ENCODE measurements at regions of chr19 and their contacts with region 1.

Region 1: GRCh38 chr19:7912136-7912696 is 2.4 kb upstream of the TGFBR3L start:
- DNase-seq: no peak
- ATAC-seq: no peak
- H3K4me3 ChIP-seq: no peak overlapping the region
- H3K4me3 Mint-ChIP-seq: no peak overlapping the region
- H3K27ac ChIP-seq: no peak overlapping the region
- H3K27ac Mint-ChIP-seq: no peak overlapping the region
- H3K4me1 ChIP-seq: peaks cover 16 to 20% of the 10 kb centered on the region in 2 donors
- H3K4me1 Mint-ChIP-seq: peaks cover 11% of the 10 kb centered on the region
- H3K27me3 ChIP-seq: peaks cover 0 to 23% (median 11%) of the 10 kb centered on the region in 4 experiments
- H3K27me3 Mint-ChIP-seq: peaks cover 9% of the 10 kb centered on the region
- CTCF ChIP-seq: no peak

Region 2: DNA sequence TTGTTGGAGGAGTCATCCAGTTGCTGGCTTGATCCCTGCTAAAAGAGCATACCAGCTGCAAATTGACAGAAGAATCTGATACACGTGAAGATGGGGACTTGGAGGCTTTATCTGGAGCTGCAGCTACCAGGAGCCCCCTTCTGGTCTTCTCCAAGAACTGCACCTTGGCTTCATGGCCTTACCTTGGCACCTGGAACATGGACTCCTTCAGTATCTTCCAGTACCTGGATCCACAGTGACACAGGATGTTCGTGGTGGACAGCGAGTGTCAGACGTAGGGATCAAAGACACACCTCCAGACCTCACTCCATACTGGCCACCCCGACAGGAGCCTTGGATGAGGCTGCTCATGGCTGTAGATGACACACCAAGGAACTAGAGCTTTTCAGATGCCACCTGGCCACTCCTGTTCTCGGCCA is 1786.6 kb before region 1 on chr19:
- CTCF ChIA-PET with region 1: no interaction called
- POLR2A ChIA-PET with region 1: no interaction called
- intact Hi-C with region 1: no loop called
- DNase-seq: peak; percentile 82
- ATAC-seq: peak; percentile 92
- H3K4me3 ChIP-seq: no peak overlapping the region
- H3K4me3 Mint-ChIP-seq: no peak overlapping the region
- H3K27ac ChIP-seq: no peak overlapping the region
- H3K27ac Mint-ChIP-seq: no peak overlapping the region
- H3K4me1 ChIP-seq: no peaks in the 10 kb centered on the region
- H3K4me1 Mint-ChIP-seq: no peaks in the 10 kb centered on the region
- H3K27me3 ChIP-seq: no peaks in the 10 kb centered on the region
- H3K27me3 Mint-ChIP-seq: peaks cover 6% of the 10 kb centered on the region
- CTCF ChIP-seq: peak; percentile 96

Region 3: GRCh38 chr19:7894564-7895561 is 17.4 kb before region 1 on chr19:
- CTCF ChIA-PET with region 1: no interaction called
- POLR2A ChIA-PET with region 1: no interaction called
- intact Hi-C with region 1: no loop called
- DNase-seq: no peak
- ATAC-seq: no peak
- H3K4me3 ChIP-seq: no peak overlapping the region
- H3K4me3 Mint-ChIP-seq: no peak overlapping the region
- H3K27ac ChIP-seq: no peak overlapping the region
- H3K27ac Mint-ChIP-seq: no peak overlapping the region
- H3K4me1 ChIP-seq: no peaks in the 10 kb centered on the region
- H3K4me1 Mint-ChIP-seq: no peaks in the 10 kb centered on the region
- H3K27me3 ChIP-seq: peaks cover 0 to 14% (median 1%) of the 10 kb centered on the region in 4 experiments
- H3K27me3 Mint-ChIP-seq: peaks cover 21% of the 10 kb centered on the region
- CTCF ChIP-seq: no peak

Region 4: GRCh38 chr19:7930765-7931164 is 18.5 kb after region 1 on chr19:
- CTCF ChIA-PET with region 1: no interaction called
- POLR2A ChIA-PET with region 1: interaction called, 11 read pairs
- intact Hi-C with region 1: no loop called
- DNase-seq: no peak
- ATAC-seq: no peak
- H3K4me3 ChIP-seq: no peak overlapping the region
- H3K4me3 Mint-ChIP-seq: no peak overlapping the region
- H3K27ac ChIP-seq: no peak overlapping the region
- H3K27ac Mint-ChIP-seq: no peak overlapping the region
- H3K4me1 ChIP-seq: peaks cover 4 to 6% of the 10 kb centered on the region in 2 donors
- H3K4me1 Mint-ChIP-seq: peaks cover 7% of the 10 kb centered on the region
- H3K27me3 ChIP-seq: no peaks in the 10 kb centered on the region
- H3K27me3 Mint-ChIP-seq: no peaks in the 10 kb centered on the region
- CTCF ChIP-seq: no peak

Region 5: DNA sequence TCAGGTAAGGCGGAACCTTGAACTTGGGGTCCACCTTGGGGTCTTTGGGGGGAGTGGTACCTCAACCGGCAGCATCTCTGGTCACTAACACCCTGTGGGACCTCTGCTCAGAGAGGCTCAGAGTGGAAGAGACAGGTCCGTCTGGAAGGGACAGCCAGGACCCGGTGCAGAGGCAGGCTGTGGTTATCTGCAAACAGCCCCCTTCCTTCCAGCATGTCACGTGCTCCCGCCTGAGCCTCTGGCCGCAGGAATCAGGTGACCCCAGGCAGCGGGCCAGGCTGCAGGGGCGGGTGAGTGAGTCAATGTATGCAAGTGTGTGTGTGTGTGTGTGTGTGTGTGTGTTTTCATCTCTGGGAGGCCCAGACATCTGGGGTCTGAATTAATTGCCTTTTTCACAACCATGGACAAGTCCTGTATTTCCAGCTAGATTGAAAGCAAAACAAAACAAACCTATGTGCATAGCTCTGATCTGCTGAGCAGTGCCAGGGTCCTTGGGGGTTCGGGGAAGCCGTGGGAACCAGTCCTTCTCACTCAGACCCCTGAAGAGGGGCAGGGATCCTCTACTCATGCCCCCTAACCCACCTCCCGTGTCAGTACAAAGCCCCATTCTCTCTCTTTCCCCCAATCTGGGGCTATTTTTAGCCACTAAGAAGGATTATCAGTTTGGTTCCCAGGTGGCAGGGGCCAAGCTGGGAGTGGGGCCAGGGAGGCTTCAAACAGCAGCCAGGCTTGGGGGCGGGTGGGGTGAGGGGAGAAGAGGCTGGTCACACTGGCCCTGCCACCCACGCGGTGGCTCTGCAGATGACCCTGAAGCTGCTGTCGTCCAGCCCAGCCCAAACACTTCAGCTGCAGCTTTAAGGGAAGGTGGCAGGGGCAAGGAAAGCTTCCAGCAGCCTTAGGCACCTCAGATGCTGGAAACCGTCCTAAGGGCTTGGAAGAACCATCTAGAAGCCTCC is 328.3 kb after region 1 on chr19:
- CTCF ChIA-PET with region 1: no interaction called
- POLR2A ChIA-PET with region 1: no interaction called
- intact Hi-C with region 1: no loop called
- DNase-seq: peak; percentile 67
- ATAC-seq: peak; percentile 81
- H3K4me3 ChIP-seq: peak overlapping the region in 1 of 5 experiments; percentile 9
- H3K4me3 Mint-ChIP-seq: peak overlapping the region; percentile 73
- H3K27ac ChIP-seq: peak overlapping the region in 1 of 2 donors; percentile 21
- H3K27ac Mint-ChIP-seq: peak overlapping the region; percentile 77
- H3K4me1 ChIP-seq: peaks cover 20 to 29% of the 10 kb centered on the region in 2 donors
- H3K4me1 Mint-ChIP-seq: peaks cover 52% of the 10 kb centered on the region
- H3K27me3 ChIP-seq: no peaks in the 10 kb centered on the region
- H3K27me3 Mint-ChIP-seq: no peaks in the 10 kb centered on the region
- CTCF ChIP-seq: no peak

Measured in B cell (primary cell).